ENCODE measurements at regions of chr1 and their contacts with region 1.

Region 1: DNA sequence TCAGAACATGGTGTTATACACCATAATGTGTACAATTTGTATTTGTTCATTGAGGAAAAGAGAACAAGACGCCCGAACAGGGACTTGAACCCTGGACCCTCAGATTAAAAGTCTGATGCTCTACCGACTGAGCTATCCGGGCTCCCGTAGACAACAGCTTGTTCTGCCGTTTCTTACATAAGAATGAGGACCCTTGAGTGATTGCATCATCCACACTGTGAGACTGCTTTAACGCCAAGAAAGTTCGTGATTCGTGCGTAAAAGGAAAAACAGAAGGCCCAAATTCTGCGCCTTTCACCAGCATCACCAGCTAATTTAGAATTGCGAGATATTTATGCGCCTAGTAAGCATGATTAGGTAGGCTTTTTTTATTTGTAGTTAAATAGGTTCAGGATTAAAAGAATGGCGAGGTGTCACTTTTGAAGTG is 9.2 kb upstream of the MDM4 start:
- DNase-seq: peak; percentile 97
- H3K4me3 ChIP-seq: peak overlapping the region; percentile 32 to 94 (median 92)
- H3K27ac ChIP-seq: peak overlapping the region; percentile 76
- H3K4me1 ChIP-seq: peaks cover 34% of the 10 kb centered on the region
- H3K27me3 ChIP-seq: no peaks in the 10 kb centered on the region
- CTCF ChIP-seq: no peak
- POLR2A ChIP-seq: no peak

Region 2: GRCh38 chr1:203861379-203862184 is 645.4 kb before region 1 on chr1 and contains the start of gene SNRPE:
- CTCF ChIA-PET with region 1: no interaction called
- POLR2A ChIA-PET with region 1: no interaction called
- dilution Hi-C with region 1: no loop called
- intact Hi-C with region 1: loop called (anchors 10 kb)
- DNase-seq: peak; percentile 99
- H3K4me3 ChIP-seq: peak within 1 kb of the TSS; percentile 67 to 99 (median 94)
- H3K27ac ChIP-seq: peak within 1 kb of the TSS; percentile 71
- H3K4me1 ChIP-seq: peaks cover 23% of the 10 kb centered on the region
- H3K27me3 ChIP-seq: no peaks in the 10 kb centered on the region
- CTCF ChIP-seq: peak; percentile 92 to 95
- POLR2A ChIP-seq: peak; percentile 84
- total RNA-seq, gene SNRPE: 199 and 219 TPM in 2 replicates

Region 3: GRCh38 chr1:204257954-204258752 is 248.8 kb before region 1 on chr1:
- CTCF ChIA-PET with region 1: interaction called, 17 read pairs
- POLR2A ChIA-PET with region 1: no interaction called
- dilution Hi-C with region 1: no loop called
- intact Hi-C with region 1: loop called (anchors 5 kb)
- DNase-seq: peak; percentile 69
- H3K4me3 ChIP-seq: no peak overlapping the region
- H3K27ac ChIP-seq: no peak overlapping the region
- H3K4me1 ChIP-seq: no peaks in the 10 kb centered on the region
- H3K27me3 ChIP-seq: no peaks in the 10 kb centered on the region
- CTCF ChIP-seq: peak; percentile 89 to 96
- POLR2A ChIP-seq: no peak

Region 4: DNA sequence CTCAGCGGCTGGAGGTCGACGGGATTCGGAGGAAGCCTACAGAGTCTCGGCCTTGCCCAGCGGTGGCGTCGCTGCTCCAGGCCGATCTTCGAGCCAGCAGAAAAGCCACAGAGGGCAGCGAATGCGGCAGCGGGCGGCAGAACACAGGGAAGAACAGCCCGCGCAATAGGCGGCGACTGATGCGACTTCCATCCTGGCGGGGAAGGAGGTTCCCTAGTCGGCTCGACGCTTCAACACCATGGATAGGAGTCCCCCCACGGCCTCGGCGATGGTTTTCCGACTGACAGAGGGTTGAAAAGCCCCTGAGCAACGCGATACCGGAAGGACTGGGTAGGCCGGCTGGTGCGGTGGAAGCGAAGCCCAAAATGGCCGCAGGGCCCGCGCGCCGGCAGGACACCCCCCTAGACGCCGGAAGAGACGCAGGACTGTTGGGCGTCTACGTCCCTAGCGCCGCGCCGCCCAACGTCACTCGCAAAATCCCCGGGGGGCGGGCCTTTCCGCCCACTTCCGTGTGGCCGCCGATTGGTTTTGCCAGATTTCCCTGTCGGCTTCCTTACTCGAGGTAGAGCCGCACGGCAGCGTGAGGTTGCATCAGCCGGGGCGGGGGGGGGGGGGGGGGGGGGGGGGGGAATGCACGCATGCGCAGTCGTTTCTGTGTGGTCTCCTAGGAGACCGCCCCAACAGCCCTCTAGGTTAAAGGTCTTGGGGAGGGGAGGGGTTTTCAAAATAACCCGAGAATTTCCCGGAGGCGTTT is 95.3 kb before region 1 on chr1 and contains the start of gene PPP1R15B:
- CTCF ChIA-PET with region 1: interaction called, 20 read pairs
- POLR2A ChIA-PET with region 1: no interaction called
- dilution Hi-C with region 1: no loop called
- intact Hi-C with region 1: loop called (anchors 2 kb)
- DNase-seq: peak; percentile 99
- H3K4me3 ChIP-seq: peak within 1 kb of the TSS; percentile 49 to 94 (median 78)
- H3K27ac ChIP-seq: peak within 1 kb of the TSS; percentile 89
- H3K4me1 ChIP-seq: peaks cover 6% of the 10 kb centered on the region
- H3K27me3 ChIP-seq: no peaks in the 10 kb centered on the region
- CTCF ChIP-seq: no peak
- POLR2A ChIP-seq: peak; percentile 96
- total RNA-seq, gene PPP1R15B: 39.8 and 41.7 TPM in 2 replicates

Region 5: DNA sequence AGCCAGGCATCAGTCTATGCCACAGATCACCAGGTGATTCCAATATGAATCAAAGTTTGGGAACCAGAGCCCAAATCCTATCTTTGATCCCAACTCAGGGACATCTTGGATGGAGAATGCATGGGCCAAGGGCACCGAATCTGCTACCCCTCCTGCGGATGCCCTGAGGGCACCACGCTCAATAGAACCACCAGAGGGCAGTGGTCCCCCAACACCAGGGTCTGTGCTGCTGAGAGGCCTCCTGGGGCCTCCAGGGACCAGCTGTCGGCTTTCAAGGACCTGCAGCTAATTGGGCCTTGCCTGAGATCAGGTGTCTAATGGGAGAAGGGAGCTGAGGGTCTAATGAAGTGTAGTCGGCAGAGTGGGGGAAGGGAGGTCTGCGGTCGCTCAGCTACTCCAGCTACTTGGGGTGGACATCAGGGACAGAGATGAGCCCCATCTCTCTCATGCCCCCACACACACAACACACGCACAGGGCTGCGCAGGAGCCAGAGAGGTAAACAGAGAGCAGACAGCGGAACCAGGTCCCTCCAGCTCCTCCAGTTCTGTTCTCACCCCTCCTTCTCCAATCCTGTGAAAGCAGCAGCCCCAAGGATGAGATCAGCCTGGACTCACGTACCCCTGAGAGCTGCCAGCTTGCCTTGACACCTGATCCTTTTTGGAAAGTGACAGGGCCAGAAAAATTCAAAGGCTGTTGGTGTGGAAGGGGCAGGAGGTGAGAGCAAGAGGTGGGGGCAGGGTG is 60.4 kb before region 1 on chr1:
- CTCF ChIA-PET with region 1: interaction called, 1,267 read pairs
- POLR2A ChIA-PET with region 1: interaction called, 5 read pairs
- dilution Hi-C with region 1: loop called (anchors 10 kb)
- intact Hi-C with region 1: loop called (anchors 1 kb)
- DNase-seq: peak; percentile 65
- H3K4me3 ChIP-seq: no peak overlapping the region
- H3K27ac ChIP-seq: no peak overlapping the region
- H3K4me1 ChIP-seq: peaks cover 9% of the 10 kb centered on the region
- H3K27me3 ChIP-seq: no peaks in the 10 kb centered on the region
- CTCF ChIP-seq: peak; percentile 73 to 82
- POLR2A ChIP-seq: no peak

Region 6: DNA sequence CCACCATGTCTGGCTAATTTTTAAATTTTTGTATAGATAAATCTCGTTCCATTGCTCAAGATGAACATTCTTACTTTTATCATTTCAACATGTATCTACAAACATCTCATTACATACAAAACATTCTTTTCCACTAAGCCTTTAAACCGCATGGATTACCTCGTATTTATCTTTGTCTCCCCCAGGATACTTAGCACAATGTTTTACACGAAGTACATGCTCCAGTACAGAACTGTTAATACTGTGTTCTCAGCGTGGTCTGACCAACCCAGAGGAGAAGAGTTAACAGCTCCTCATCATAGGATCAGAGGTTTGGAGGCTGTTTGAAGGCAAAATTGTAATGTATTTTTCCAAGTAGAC is 19.7 kb before region 1 on chr1:
- CTCF ChIA-PET with region 1: interaction called, 52 read pairs
- POLR2A ChIA-PET with region 1: no interaction called
- dilution Hi-C with region 1: no loop called
- intact Hi-C with region 1: no loop called
- DNase-seq: no peak
- H3K4me3 ChIP-seq: no peak overlapping the region
- H3K27ac ChIP-seq: no peak overlapping the region
- H3K4me1 ChIP-seq: no peaks in the 10 kb centered on the region
- H3K27me3 ChIP-seq: no peaks in the 10 kb centered on the region
- CTCF ChIP-seq: no peak
- POLR2A ChIP-seq: no peak

Region 7: DNA sequence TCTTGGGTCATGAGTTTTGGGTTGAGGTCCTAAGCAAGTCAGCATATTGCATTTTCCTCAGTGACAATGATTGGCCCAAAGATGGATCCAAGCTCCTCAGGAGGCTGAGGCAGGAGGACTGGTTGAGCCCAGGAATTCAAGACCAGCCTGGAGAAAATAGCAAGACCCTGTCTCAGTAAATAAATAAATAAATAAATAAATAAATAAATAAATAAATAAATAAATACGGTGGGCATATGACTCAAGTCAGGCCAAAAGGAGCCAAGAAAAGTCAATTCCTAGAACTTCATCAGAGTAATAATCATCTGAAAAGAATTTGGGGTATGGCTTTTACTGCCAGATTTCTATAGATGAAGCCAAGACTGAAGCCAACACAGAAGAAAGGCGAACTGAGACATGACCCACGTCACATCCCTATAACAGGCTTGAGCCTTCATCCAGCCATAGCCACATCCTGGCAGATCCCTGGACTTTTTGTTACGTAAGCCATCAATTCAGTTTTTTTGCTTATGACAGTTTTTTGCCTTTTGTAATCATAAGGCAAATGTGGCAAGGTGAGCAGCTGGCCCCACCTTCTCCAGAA is 275.2 kb after region 1 on chr1:
- CTCF ChIA-PET with region 1: no interaction called
- POLR2A ChIA-PET with region 1: no interaction called
- dilution Hi-C with region 1: no loop called
- intact Hi-C with region 1: no loop called
- DNase-seq: no peak
- H3K4me3 ChIP-seq: no peak overlapping the region
- H3K27ac ChIP-seq: no peak overlapping the region
- H3K4me1 ChIP-seq: no peaks in the 10 kb centered on the region
- H3K27me3 ChIP-seq: peaks cover 0 to 5% of the 10 kb centered on the region in 2 experiments
- CTCF ChIP-seq: no peak
- POLR2A ChIP-seq: no peak